ENCODE measurements at regions of chr6 and their contacts with region 1.

Region 1: DNA sequence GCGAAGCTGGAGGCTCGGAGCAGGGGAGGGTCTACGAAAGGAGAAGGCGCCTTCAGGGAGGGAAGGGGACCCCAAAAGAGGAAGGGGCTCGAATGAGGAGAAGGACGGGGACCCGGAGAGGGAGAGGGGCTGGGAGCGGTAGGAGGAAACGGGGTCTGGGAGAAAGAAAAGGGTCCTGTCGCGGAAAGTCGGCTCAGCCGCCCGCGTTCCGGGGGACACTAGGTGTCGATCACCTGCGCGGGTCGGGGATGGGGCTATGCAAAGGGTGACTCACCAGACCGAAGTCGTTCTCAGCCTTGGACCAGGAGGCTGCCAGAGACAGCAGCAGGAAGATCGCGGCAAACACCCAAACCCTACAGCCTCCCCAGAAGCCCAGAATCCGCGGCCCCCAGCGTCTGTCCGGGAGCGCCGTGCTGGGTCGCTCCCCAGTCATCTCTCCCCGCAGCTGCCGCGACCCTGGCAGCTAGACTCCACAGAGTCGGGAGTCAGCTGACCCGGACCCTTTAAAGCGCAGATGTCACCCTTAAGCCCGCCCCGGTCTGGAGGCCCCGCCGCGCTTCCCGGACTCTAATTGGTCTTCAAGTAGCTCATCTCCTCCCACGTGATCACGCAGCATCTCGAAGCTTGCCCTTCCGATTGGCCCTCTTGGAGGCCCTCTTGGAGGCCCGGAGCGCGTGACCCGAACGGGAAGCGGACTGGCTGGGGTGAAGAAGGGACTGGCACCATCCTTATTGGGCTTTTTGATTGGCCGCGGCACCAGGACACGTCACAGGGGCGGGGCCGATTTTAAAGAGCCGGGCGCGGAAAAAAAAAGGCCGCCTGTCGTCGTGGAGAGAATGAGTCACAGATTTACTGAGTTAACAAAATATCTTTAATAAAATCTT is at the start of gene NEU1:
- DNase-seq: peak; percentile 95 to 100 (median 98)
- ATAC-seq: peak; percentile 93
- H3K4me3 ChIP-seq: peak within 1 kb of the TSS; percentile 99
- H3K4me3 Mint-ChIP-seq: peak within 1 kb of the TSS; percentile 88
- H3K27ac ChIP-seq: peak within 1 kb of the TSS; percentile 80 to 96
- H3K27ac Mint-ChIP-seq: peak within 1 kb of the TSS; percentile 91
- H3K4me1 ChIP-seq: peaks cover 37% of the 10 kb centered on the region
- H3K4me1 Mint-ChIP-seq: peaks cover 28% of the 10 kb centered on the region
- H3K27me3 ChIP-seq: no peaks in the 10 kb centered on the region
- H3K27me3 Mint-ChIP-seq: no peaks in the 10 kb centered on the region
- CTCF ChIP-seq: no peak
- total RNA-seq, gene NEU1: 19.7 to 21.1 TPM

Region 2: GRCh38 chr6:31680840-31681671 is 181.5 kb before region 1 on chr6 and contains the start of gene LY6G5C:
- CTCF ChIA-PET with region 1: no interaction called
- POLR2A ChIA-PET with region 1: interaction called, 3 read pairs
- intact Hi-C with region 1: loop called in 1 of 2 experiments (anchors 1 kb)
- DNase-seq: peak in 13 of 14 experiments; percentile 45 to 83 (median 61)
- ATAC-seq: peak; percentile 71
- H3K4me3 ChIP-seq: peak within 1 kb of the TSS; percentile 79
- H3K4me3 Mint-ChIP-seq: peak within 1 kb of the TSS; percentile 87
- H3K27ac ChIP-seq: peak within 1 kb of the TSS in 1 of 2 donors; percentile 44
- H3K27ac Mint-ChIP-seq: peak within 1 kb of the TSS; percentile 35
- H3K4me1 ChIP-seq: peaks cover 21% of the 10 kb centered on the region
- H3K4me1 Mint-ChIP-seq: peaks cover 19% of the 10 kb centered on the region
- H3K27me3 ChIP-seq: no peaks in the 10 kb centered on the region
- H3K27me3 Mint-ChIP-seq: no peaks in the 10 kb centered on the region
- CTCF ChIP-seq: peak; percentile 71
- total RNA-seq, gene LY6G5C: 0.49 to 0.67 TPM

Region 3: GRCh38 chr6:31834434-31835198 is 28.0 kb before region 1 on chr6:
- CTCF ChIA-PET with region 1: interaction called, 11 read pairs
- POLR2A ChIA-PET with region 1: interaction called, 36 read pairs
- intact Hi-C with region 1: loop called (anchors 1 kb)
- DNase-seq: peak; percentile 72 to 89 (median 78)
- ATAC-seq: peak; percentile 71
- H3K4me3 ChIP-seq: peak overlapping the region; percentile 94
- H3K4me3 Mint-ChIP-seq: peak overlapping the region; percentile 96
- H3K27ac ChIP-seq: peak overlapping the region; percentile 97 to 98
- H3K27ac Mint-ChIP-seq: peak overlapping the region; percentile 98
- H3K4me1 ChIP-seq: peaks cover 66% of the 10 kb centered on the region
- H3K4me1 Mint-ChIP-seq: peaks cover 60% of the 10 kb centered on the region
- H3K27me3 ChIP-seq: no peaks in the 10 kb centered on the region
- H3K27me3 Mint-ChIP-seq: no peaks in the 10 kb centered on the region
- CTCF ChIP-seq: no peak

Region 4: DNA sequence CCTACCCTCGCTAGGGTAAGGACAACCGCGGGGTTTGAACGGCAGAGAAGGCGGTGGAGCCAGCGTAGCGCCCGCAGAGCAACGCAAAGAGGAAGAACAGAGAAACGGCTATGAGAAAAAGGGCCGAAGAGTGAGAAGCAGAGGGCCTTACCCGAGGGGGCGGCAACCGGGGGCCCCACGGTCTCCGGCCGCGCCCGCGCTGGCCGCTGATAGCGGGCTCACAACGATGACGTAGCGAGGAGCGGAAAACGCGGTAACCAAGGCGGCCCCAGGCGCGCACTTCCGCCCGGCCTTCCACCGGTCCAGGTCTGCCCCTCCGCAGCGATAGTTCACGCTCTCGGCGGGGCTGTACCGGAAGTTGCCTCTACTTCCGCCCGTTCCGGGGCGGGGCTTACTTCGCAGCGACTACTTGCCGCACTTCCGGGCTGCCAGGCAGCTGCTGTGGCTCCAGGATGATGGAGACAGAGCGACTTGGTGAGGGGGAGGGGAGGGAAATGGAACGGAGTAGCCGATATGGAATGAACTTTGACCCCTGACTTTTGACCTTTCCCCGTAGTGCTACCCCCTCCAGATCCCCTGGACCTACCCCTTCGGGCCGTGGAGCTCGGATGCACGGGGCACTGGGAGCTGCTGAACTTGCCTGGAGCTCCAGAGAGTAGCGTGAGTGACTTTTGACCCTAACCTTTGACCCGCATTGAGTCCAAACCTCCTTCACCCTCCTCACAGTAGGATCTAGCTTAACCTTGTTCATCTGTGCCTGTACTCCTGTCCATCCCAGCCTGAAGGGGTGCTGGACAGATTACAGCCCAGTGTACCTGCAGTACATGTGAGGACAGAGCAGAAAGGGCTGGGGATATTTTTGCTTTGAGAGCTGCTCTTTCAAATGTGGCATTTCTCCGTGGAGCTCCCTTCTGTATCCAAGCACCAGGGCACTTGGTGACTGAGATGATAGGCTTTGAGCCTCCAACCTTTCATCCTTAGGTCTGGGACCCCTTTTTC is 96.5 kb after region 1 on chr6 and contains the starts of genes NELFE and SKIC2:
- CTCF ChIA-PET with region 1: no interaction called
- POLR2A ChIA-PET with region 1: interaction called, 10 read pairs
- intact Hi-C with region 1: no loop called
- DNase-seq: peak; percentile 96 to 100 (median 98)
- ATAC-seq: peak; percentile 97
- H3K4me3 ChIP-seq: peak within 1 kb of the TSS; percentile 97
- H3K4me3 Mint-ChIP-seq: peak within 1 kb of the TSS; percentile 96
- H3K27ac ChIP-seq: peak within 1 kb of the TSS; percentile 94 to 96
- H3K27ac Mint-ChIP-seq: peak within 1 kb of the TSS; percentile 97
- H3K4me1 ChIP-seq: peaks cover 30% of the 10 kb centered on the region
- H3K4me1 Mint-ChIP-seq: peaks cover 38% of the 10 kb centered on the region
- H3K27me3 ChIP-seq: no peaks in the 10 kb centered on the region
- H3K27me3 Mint-ChIP-seq: no peaks in the 10 kb centered on the region
- CTCF ChIP-seq: no peak
- total RNA-seq, gene NELFE: 53.8 to 58.2 TPM
- total RNA-seq, gene SKIC2: 133 to 141 TPM

Region 5: DNA sequence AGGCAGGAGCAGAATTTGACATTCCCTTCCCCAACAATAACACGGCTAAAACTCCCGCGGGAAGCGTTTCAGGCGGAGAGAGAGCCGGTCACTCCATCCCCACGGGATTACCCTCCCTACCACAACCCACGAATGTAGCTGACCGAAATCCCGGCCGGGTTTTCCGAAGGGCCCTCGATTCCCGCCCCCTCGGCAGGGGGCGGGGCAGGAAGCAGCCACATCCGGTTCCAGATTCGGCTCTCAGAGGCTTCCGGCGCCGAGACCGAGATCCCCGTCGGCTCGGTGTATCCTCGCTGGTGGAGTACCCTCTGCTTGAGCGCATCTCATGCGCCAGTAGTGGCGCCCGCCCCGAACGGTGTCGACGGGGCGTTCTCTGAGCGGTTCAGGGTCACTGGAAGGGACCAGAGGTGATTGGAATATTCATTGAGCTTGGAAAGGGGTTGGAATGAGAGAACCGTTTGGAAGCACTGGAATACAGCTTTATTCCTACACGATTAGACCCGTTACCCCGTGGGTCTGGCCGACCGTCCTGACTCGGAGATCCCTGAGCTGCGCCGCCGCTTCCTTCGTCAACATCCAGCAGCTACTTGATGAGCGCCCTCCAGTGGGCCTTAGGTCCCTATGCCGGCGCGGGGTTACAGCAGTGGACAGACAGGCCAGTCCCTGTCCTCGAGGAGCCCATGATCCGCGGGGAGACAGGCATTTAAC is 1436.8 kb after region 1 on chr6:
- CTCF ChIA-PET with region 1: no interaction called
- POLR2A ChIA-PET with region 1: no interaction called
- intact Hi-C with region 1: loop called in 1 of 2 experiments (anchors 10 kb)
- DNase-seq: peak; percentile 89 to 97 (median 92)
- ATAC-seq: peak; percentile 84
- H3K4me3 ChIP-seq: peak overlapping the region; percentile 91
- H3K4me3 Mint-ChIP-seq: peak overlapping the region; percentile 98
- H3K27ac ChIP-seq: peak overlapping the region; percentile 90 to 96
- H3K27ac Mint-ChIP-seq: peak overlapping the region; percentile 99
- H3K4me1 ChIP-seq: peaks cover 34% of the 10 kb centered on the region
- H3K4me1 Mint-ChIP-seq: peaks cover 32% of the 10 kb centered on the region
- H3K27me3 ChIP-seq: no peaks in the 10 kb centered on the region
- H3K27me3 Mint-ChIP-seq: no peaks in the 10 kb centered on the region
- CTCF ChIP-seq: peak; percentile 74

Region 6: GRCh38 chr6:33700391-33701050 is 1837.9 kb after region 1 on chr6:
- CTCF ChIA-PET with region 1: no interaction called
- POLR2A ChIA-PET with region 1: no interaction called
- intact Hi-C with region 1: no loop called
- DNase-seq: peak; percentile 60 to 88 (median 72)
- ATAC-seq: peak; percentile 58
- H3K4me3 ChIP-seq: no peak overlapping the region
- H3K4me3 Mint-ChIP-seq: no peak overlapping the region
- H3K27ac ChIP-seq: no peak overlapping the region
- H3K27ac Mint-ChIP-seq: peak overlapping the region; percentile 84
- H3K4me1 ChIP-seq: peaks cover 42% of the 10 kb centered on the region
- H3K4me1 Mint-ChIP-seq: peaks cover 50% of the 10 kb centered on the region
- H3K27me3 ChIP-seq: no peaks in the 10 kb centered on the region
- H3K27me3 Mint-ChIP-seq: no peaks in the 10 kb centered on the region
- CTCF ChIP-seq: peak; percentile 73

Measured in CD4-positive, alpha-beta T cell (primary cell).